Naive thymus-derived CD4-positive, alpha-beta T cell (primary cell): ENCODE measurements at regions of chr10 and their contacts with region 1.

Region 1: GRCh38 chr10:22714479-22715289 is at the start of gene PIP4K2A:
- DNase-seq: peak; percentile 64 to 84 (median 77)
- ATAC-seq: peak; percentile 90
- H3K4me3 ChIP-seq: peak within 1 kb of the TSS; percentile 89
- H3K4me3 Mint-ChIP-seq: peak within 1 kb of the TSS; percentile 80 to 97 (median 92)
- H3K27ac ChIP-seq: peak within 1 kb of the TSS; percentile 84
- H3K27ac Mint-ChIP-seq: peak within 1 kb of the TSS; percentile 86 to 93 (median 90)
- H3K4me1 ChIP-seq: peaks cover 12 to 22% of the 10 kb centered on the region in 2 donors
- H3K4me1 Mint-ChIP-seq: peaks cover 25 to 38% (median 35%) of the 10 kb centered on the region in 7 donors
- H3K27me3 ChIP-seq: no peaks in the 10 kb centered on the region
- H3K27me3 Mint-ChIP-seq: peaks cover 0 to 6% (median 0%) of the 10 kb centered on the region in 5 donors
- total RNA-seq, gene PIP4K2A: 110 to 152 (median 140) TPM

Region 2: DNA sequence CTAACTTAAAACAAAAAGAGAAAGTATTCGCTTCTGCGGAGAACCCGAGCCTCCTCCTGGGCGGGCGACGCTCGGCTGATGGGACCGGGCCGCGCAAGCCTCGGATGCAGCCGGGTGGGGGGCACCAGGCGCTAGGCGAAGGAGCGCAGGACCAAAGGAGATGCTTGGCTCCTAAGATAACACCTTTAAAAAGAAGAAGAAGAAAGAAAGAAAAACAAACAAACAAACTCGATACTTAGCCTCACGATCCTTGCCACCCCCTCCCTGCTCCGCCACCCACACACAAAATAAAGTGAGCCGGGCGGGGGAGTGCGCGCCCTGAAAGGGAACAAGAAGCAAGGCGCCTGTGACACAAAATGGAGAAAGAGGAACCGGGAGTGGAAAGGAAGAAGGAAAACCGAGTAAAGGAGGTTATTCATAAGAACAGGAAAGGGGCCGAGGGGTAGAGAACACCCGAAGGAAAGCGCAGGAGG is 462.9 kb before region 1 on chr10:
- CTCF ChIA-PET with region 1: no interaction called
- POLR2A ChIA-PET with region 1: no interaction called
- intact Hi-C with region 1: loop called in 1 of 2 experiments (anchors 10 kb)
- DNase-seq: peak in 8 of 9 donors; percentile 48 to 76 (median 73)
- ATAC-seq: peak; percentile 73
- H3K4me3 ChIP-seq: peak overlapping the region; percentile 82
- H3K4me3 Mint-ChIP-seq: peak overlapping the region; percentile 90 to 100 (median 94)
- H3K27ac ChIP-seq: peak overlapping the region; percentile 87
- H3K27ac Mint-ChIP-seq: peak overlapping the region; percentile 95 to 100 (median 99)
- H3K4me1 ChIP-seq: peaks cover 0 to 4% of the 10 kb centered on the region in 2 donors
- H3K4me1 Mint-ChIP-seq: peaks cover 8 to 40% (median 38%) of the 10 kb centered on the region in 7 donors
- H3K27me3 ChIP-seq: no peaks in the 10 kb centered on the region
- H3K27me3 Mint-ChIP-seq: peaks cover 8 to 31% (median 10%) of the 10 kb centered on the region in 5 donors

Region 3: GRCh38 chr10:22573820-22574569 is 140.7 kb before region 1 on chr10:
- CTCF ChIA-PET with region 1: no interaction called
- POLR2A ChIA-PET with region 1: interaction called, 5 read pairs
- intact Hi-C with region 1: loop called in 1 of 2 experiments (anchors 5 kb)
- DNase-seq: peak in 5 of 9 donors; percentile 16 to 26 (median 24)
- ATAC-seq: peak; percentile 67
- H3K4me3 ChIP-seq: no peak overlapping the region
- H3K4me3 Mint-ChIP-seq: peak overlapping the region in 2 of 10 donors; percentile 24 to 66
- H3K27ac ChIP-seq: no peak overlapping the region
- H3K27ac Mint-ChIP-seq: peak overlapping the region; percentile 8 to 91 (median 62)
- H3K4me1 ChIP-seq: peaks cover 0 to 33% of the 10 kb centered on the region in 2 donors
- H3K4me1 Mint-ChIP-seq: peaks cover 32 to 80% (median 62%) of the 10 kb centered on the region in 7 donors
- H3K27me3 ChIP-seq: no peaks in the 10 kb centered on the region
- H3K27me3 Mint-ChIP-seq: no peaks in the 10 kb centered on the region

Region 4: DNA sequence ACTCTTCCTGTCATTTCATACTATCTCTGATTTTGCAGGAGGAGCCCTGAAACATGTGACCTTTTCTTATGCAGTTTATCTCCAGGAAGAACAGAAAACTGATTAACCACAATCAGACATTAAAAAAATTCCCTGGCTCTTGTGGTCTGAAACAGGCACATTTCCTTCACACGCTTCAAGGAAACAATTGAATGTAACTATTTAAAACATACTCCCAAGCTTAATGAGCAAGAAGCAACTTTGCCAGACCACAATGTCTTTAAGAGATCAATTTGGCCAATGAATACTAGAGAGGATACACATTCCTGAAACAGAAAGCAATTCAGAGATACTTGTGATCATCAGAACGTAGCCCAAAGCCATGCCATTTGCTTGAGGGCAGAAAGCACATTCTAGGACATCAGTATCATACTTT is 66.1 kb before region 1 on chr10:
- CTCF ChIA-PET with region 1: no interaction called
- POLR2A ChIA-PET with region 1: interaction called, 71 read pairs
- intact Hi-C with region 1: no loop called
- DNase-seq: no peak
- ATAC-seq: no peak
- H3K4me3 ChIP-seq: peak overlapping the region; percentile 37
- H3K4me3 Mint-ChIP-seq: peak overlapping the region in 9 of 10 donors; percentile 60 to 89 (median 82)
- H3K27ac ChIP-seq: peak overlapping the region; percentile 53
- H3K27ac Mint-ChIP-seq: peak overlapping the region; percentile 75 to 97 (median 93)
- H3K4me1 ChIP-seq: peaks cover 97 to 98% of the 10 kb centered on the region in 2 donors
- H3K4me1 Mint-ChIP-seq: peaks cover 79 to 96% (median 90%) of the 10 kb centered on the region in 7 donors
- H3K27me3 ChIP-seq: no peaks in the 10 kb centered on the region
- H3K27me3 Mint-ChIP-seq: no peaks in the 10 kb centered on the region

Region 5: DNA sequence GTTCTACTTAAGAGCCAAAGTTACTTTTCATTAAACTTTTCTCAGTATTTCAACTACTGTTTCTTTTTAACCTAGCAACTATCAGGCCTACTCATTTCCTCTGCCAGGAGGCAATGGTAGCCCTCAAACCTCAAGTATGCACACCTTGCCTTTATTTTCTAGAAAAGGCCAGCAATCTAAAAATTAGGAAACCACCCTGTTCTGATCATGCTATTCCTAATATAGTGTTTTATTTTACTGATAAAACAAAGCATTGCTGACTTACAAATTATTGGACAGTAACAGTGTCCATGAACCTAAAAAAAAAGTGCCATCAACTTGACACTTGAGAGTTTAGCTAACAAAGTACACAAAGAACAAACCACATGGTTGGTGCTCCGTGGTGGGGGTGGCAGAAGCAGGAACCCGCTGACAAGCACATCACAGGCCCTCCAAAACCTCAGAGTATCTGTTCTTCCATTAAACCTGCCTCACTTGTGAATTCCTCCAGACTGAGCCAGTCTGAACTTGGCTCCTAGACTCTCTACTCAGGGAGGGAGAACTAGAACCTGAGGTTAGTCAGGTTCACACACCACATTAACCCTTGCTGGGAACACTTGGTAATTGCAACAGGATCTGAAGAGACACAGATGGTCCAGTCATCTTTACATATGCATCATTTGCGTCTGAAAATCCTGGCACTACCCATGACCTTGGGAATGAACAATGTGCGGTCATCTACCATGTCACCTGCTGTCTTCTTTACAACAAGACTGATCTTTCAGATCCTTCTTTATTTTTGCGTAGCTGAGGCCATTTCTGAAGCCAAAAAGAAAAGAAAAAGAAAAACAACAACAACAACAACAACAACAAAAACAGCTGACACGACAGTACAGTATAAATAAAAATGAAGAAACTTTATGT is 32.2 kb before region 1 on chr10:
- CTCF ChIA-PET with region 1: interaction called, 4 read pairs
- POLR2A ChIA-PET with region 1: interaction called, 12 read pairs
- intact Hi-C with region 1: loop called (anchors 1 kb)
- DNase-seq: peak in 8 of 9 donors; percentile 43 to 81 (median 75)
- ATAC-seq: peak; percentile 79
- H3K4me3 ChIP-seq: peak overlapping the region; percentile 36
- H3K4me3 Mint-ChIP-seq: peak overlapping the region; percentile 67 to 94 (median 80)
- H3K27ac ChIP-seq: peak overlapping the region; percentile 73
- H3K27ac Mint-ChIP-seq: peak overlapping the region; percentile 90 to 100 (median 95)
- H3K4me1 ChIP-seq: peaks cover 86 to 94% of the 10 kb centered on the region in 2 donors
- H3K4me1 Mint-ChIP-seq: peaks cover 64 to 99% (median 91%) of the 10 kb centered on the region in 7 donors
- H3K27me3 ChIP-seq: no peaks in the 10 kb centered on the region
- H3K27me3 Mint-ChIP-seq: no peaks in the 10 kb centered on the region

Region 6: DNA sequence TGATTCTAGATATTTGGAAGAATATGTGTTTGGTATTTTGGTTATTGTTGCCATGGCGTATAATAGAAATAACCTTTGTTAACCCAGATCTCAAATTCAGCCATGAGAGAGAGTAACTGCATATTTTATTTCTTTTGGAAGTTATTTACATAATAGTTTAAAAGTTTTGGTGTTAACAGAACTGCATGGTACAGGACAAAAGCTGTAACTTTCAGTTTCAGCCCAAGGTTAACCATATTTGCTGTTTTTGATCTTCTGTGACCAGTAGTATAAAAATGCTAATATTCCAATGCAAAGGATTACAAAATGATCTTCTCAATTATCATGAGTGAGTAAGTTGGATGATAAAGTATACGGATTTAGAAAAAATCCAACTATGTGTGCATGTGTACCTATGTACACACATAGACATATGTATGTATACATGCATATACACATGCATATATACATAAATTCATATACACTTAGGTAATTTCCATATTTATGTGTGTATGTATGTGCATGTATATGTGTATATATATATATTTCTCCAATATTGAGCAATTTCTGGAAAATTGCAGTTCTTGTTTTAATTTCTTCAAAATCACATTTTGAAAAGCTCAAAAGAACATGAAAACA is 37.7 kb after region 1 on chr10:
- CTCF ChIA-PET with region 1: no interaction called
- POLR2A ChIA-PET with region 1: no interaction called
- intact Hi-C with region 1: no loop called
- DNase-seq: no peak
- ATAC-seq: no peak
- H3K4me3 ChIP-seq: no peak overlapping the region
- H3K4me3 Mint-ChIP-seq: no peak overlapping the region
- H3K27ac ChIP-seq: no peak overlapping the region
- H3K27ac Mint-ChIP-seq: no peak overlapping the region
- H3K4me1 ChIP-seq: no peaks in the 10 kb centered on the region
- H3K4me1 Mint-ChIP-seq: peaks cover 0 to 12% (median 2%) of the 10 kb centered on the region in 7 donors
- H3K27me3 ChIP-seq: no peaks in the 10 kb centered on the region
- H3K27me3 Mint-ChIP-seq: peaks cover 0 to 8% (median 0%) of the 10 kb centered on the region in 5 donors

Region 7: DNA sequence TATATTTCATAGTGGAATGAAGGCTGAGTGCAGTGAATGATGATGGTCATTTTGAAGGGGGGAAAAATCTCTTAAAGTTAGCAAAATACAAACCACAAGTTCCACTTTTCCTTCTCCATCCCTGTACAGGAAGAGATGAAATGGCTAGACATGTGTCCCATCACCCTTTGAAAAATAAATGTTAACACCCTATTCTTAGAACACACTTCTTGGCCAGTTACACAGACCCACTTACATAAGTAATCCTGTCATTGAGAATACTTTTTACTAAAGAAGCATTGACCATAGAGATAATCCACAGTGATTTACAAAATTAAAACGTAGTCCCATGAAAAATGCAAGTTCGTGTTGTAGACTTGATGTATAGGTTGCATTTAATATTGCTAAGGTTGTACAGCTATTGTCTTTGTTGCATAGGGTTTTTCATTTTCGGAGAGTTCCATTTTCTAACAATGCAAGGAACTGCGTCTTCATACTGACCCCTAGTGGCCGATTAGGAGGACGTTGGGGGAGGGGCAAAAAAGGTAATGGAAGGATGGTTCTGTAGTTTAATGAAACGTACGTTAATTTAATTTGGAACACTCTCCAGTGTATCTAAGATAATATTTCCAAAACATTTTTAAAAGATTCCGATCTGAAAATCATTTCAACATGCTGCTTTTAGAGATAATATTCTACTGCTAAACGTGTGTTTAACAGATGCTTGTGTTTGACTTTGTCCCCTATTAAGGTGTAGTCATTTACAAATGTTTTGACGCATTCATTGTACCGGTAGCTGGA is 274.1 kb after region 1 on chr10:
- CTCF ChIA-PET with region 1: no interaction called
- POLR2A ChIA-PET with region 1: interaction called, 8 read pairs
- intact Hi-C with region 1: loop called (anchors 5 to 10 kb)
- DNase-seq: peak; percentile 14 to 83 (median 77)
- ATAC-seq: peak; percentile 94
- H3K4me3 ChIP-seq: no peak overlapping the region
- H3K4me3 Mint-ChIP-seq: peak overlapping the region in 4 of 10 donors; percentile 28 to 35 (median 30)
- H3K27ac ChIP-seq: no peak overlapping the region
- H3K27ac Mint-ChIP-seq: peak overlapping the region in 4 of 9 donors; percentile 17 to 65 (median 54)
- H3K4me1 ChIP-seq: peaks cover 0 to 4% of the 10 kb centered on the region in 2 donors
- H3K4me1 Mint-ChIP-seq: peaks cover 0 to 25% (median 18%) of the 10 kb centered on the region in 7 donors
- H3K27me3 ChIP-seq: no peaks in the 10 kb centered on the region
- H3K27me3 Mint-ChIP-seq: peaks cover 0 to 22% (median under 1%) of the 10 kb centered on the region in 5 donors